Heart left ventricle (tissue), 16 donors: ENCODE measurements at regions of chr1 and their contacts with region 1.

Region 1: GRCh38 chr1:20124456-20125057 is 5.2 kb upstream of the PLA2G2D start:
- DNase-seq: no peak
- ATAC-seq: peak in 3 of 4 donors; percentile 65 to 86 (median 76)
- H3K4me3 ChIP-seq: no peak overlapping the region
- H3K27ac ChIP-seq: no peak overlapping the region
- H3K4me1 ChIP-seq: peaks cover 0 to 14% (median 0%) of the 10 kb centered on the region in 12 donors
- H3K27me3 ChIP-seq: peaks cover 0 to 6% (median 3%) of the 10 kb centered on the region in 9 donors
- CTCF ChIP-seq: no peak
- POLR2A ChIP-seq: no peak

Region 2: GRCh38 chr1:18217398-18218043 is 1907.0 kb before region 1 on chr1:
- intact Hi-C with region 1: loop called in 1 of 10 experiments (anchors 10 kb)
- DNase-seq: peak in 1 of 5 donors; percentile 27
- ATAC-seq: no peak
- H3K4me3 ChIP-seq: no peak overlapping the region
- H3K27ac ChIP-seq: no peak overlapping the region
- H3K4me1 ChIP-seq: no peaks in the 10 kb centered on the region
- H3K27me3 ChIP-seq: peaks cover 0 to 12% (median 0%) of the 10 kb centered on the region in 9 donors
- CTCF ChIP-seq: peak in 2 of 12 donors; percentile 11 to 22
- POLR2A ChIP-seq: no peak

Region 3: DNA sequence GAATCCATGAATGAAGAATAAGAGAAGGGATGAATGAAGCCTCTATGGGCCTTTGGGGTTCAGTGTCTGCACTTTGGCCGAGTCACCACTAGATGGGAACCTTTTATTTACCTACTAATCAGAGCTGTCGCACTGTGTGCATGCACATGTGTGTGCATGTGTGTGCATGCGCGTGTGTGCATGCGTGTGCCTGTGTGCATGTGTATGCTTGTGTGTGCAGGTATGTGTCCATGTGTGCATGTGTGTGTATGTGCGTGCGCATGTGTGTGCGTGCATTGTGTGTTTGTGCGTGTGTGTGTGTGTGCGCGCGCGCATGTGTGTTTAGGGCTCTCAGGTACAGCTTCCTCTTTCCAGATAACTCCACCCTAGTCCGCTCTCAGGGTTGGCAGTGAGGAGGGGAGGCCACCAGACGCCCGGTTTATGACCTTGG is 41.0 kb after region 1 on chr1:
- intact Hi-C with region 1: no loop called
- DNase-seq: peak in 1 of 5 donors; percentile 20
- ATAC-seq: peak in 1 of 4 donors; percentile 17
- H3K4me3 ChIP-seq: no peak overlapping the region
- H3K27ac ChIP-seq: peak overlapping the region in 1 of 12 donors; percentile 69
- H3K4me1 ChIP-seq: peaks cover 0 to 19% (median 0%) of the 10 kb centered on the region in 12 donors
- H3K27me3 ChIP-seq: peaks cover 0 to 23% (median 0%) of the 10 kb centered on the region in 9 donors
- CTCF ChIP-seq: peak in 5 of 12 donors; percentile 15 to 23 (median 19)
- POLR2A ChIP-seq: no peak